IMR-90 (cell line): ENCODE measurements at regions of chr4 and their contacts with region 1.

Region 1: GRCh38 chr4:122086338-122087065 is 65.6 kb upstream of the BLTP1 start:
- DNase-seq: peak; percentile 18
- ATAC-seq: no peak
- H3K4me3 ChIP-seq: no peak overlapping the region
- H3K27ac ChIP-seq: no peak overlapping the region
- H3K4me1 ChIP-seq: peaks cover 4% of the 10 kb centered on the region
- H3K27me3 ChIP-seq: no peaks in the 10 kb centered on the region
- CTCF ChIP-seq: no peak
- POLR2A ChIP-seq: no peak
- RAD21 ChIP-seq: no peak

Region 2: GRCh38 chr4:122142686-122143085 is 56.2 kb after region 1 on chr4:
- CTCF ChIA-PET with region 1: no interaction called
- POLR2A ChIA-PET with region 1: no interaction called
- dilution Hi-C with region 1: no loop called
- in situ Hi-C with region 1: no loop called
- intact Hi-C with region 1: loop called (anchors 10 kb)
- DNase-seq: no peak
- ATAC-seq: no peak
- H3K4me3 ChIP-seq: no peak overlapping the region
- H3K27ac ChIP-seq: no peak overlapping the region
- H3K4me1 ChIP-seq: no peaks in the 10 kb centered on the region
- H3K27me3 ChIP-seq: no peaks in the 10 kb centered on the region
- CTCF ChIP-seq: no peak
- POLR2A ChIP-seq: no peak
- RAD21 ChIP-seq: no peak

Region 3: GRCh38 chr4:122673252-122673651 is 586.8 kb after region 1 on chr4:
- CTCF ChIA-PET with region 1: no interaction called
- POLR2A ChIA-PET with region 1: no interaction called
- dilution Hi-C with region 1: no loop called
- in situ Hi-C with region 1: no loop called
- intact Hi-C with region 1: no loop called
- DNase-seq: no peak
- ATAC-seq: peak; percentile 46; the same call in 1 of the 2 replicates
- H3K4me3 ChIP-seq: no peak overlapping the region
- H3K27ac ChIP-seq: no peak overlapping the region
- H3K4me1 ChIP-seq: peaks cover 10% of the 10 kb centered on the region
- H3K27me3 ChIP-seq: no peaks in the 10 kb centered on the region
- CTCF ChIP-seq: no peak
- POLR2A ChIP-seq: no peak
- RAD21 ChIP-seq: no peak